Panc1 (cell line): ENCODE measurements at regions of chr5 and their contacts with region 1.

Region 1: GRCh38 chr5:135560858-135561257 is 17.9 kb downstream of the CXCL14 start:
- DNase-seq: peak; percentile 42
- ATAC-seq: peak; percentile 95
- H3K4me3 ChIP-seq: no peak overlapping the region
- H3K27ac ChIP-seq: no peak overlapping the region
- H3K4me1 ChIP-seq: no peaks in the 10 kb centered on the region
- H3K27me3 ChIP-seq: peaks cover 15% of the 10 kb centered on the region
- CTCF ChIP-seq: peak; percentile 93

Region 2: GRCh38 chr5:135457424-135458071 is 103.3 kb before region 1 on chr5:
- CTCF ChIA-PET with region 1: interaction called, 12 read pairs
- POLR2A ChIA-PET with region 1: no interaction called
- in situ Hi-C with region 1: no loop called
- intact Hi-C with region 1: no loop called
- DNase-seq: no peak
- ATAC-seq: peak; percentile 88
- H3K4me3 ChIP-seq: no peak overlapping the region
- H3K27ac ChIP-seq: no peak overlapping the region
- H3K4me1 ChIP-seq: 0 out of 2 replicates have a peak, but pooled peaks cover 4% of the 10 kb centered on the region
- H3K27me3 ChIP-seq: peaks cover 15% of the 10 kb centered on the region
- CTCF ChIP-seq: peak; percentile 93

Region 3: GRCh38 chr5:135480511-135480910 is 80.3 kb before region 1 on chr5:
- CTCF ChIA-PET with region 1: interaction called, 10 read pairs
- POLR2A ChIA-PET with region 1: no interaction called
- in situ Hi-C with region 1: no loop called
- intact Hi-C with region 1: no loop called
- DNase-seq: no peak
- ATAC-seq: no peak
- H3K4me3 ChIP-seq: no peak overlapping the region
- H3K27ac ChIP-seq: no peak overlapping the region
- H3K4me1 ChIP-seq: no peaks in the 10 kb centered on the region
- H3K27me3 ChIP-seq: peaks cover under 1% of the 10 kb centered on the region
- CTCF ChIP-seq: no peak

Region 4: GRCh38 chr5:135729321-135729786 is 168.5 kb after region 1 on chr5:
- CTCF ChIA-PET with region 1: interaction called, 8 read pairs
- POLR2A ChIA-PET with region 1: interaction called, 3 read pairs
- in situ Hi-C with region 1: no loop called
- intact Hi-C with region 1: loop called (anchors 5 kb)
- DNase-seq: no peak
- ATAC-seq: peak; percentile 66; the same call in 1 of the 2 replicates
- H3K4me3 ChIP-seq: no peak overlapping the region
- H3K27ac ChIP-seq: no peak overlapping the region
- H3K4me1 ChIP-seq: no peaks in the 10 kb centered on the region
- H3K27me3 ChIP-seq: peaks cover 6% of the 10 kb centered on the region; the same call in 1 of the 2 replicates
- CTCF ChIP-seq: no peak; the same call in 1 of the 2 replicates

Region 5: DNA sequence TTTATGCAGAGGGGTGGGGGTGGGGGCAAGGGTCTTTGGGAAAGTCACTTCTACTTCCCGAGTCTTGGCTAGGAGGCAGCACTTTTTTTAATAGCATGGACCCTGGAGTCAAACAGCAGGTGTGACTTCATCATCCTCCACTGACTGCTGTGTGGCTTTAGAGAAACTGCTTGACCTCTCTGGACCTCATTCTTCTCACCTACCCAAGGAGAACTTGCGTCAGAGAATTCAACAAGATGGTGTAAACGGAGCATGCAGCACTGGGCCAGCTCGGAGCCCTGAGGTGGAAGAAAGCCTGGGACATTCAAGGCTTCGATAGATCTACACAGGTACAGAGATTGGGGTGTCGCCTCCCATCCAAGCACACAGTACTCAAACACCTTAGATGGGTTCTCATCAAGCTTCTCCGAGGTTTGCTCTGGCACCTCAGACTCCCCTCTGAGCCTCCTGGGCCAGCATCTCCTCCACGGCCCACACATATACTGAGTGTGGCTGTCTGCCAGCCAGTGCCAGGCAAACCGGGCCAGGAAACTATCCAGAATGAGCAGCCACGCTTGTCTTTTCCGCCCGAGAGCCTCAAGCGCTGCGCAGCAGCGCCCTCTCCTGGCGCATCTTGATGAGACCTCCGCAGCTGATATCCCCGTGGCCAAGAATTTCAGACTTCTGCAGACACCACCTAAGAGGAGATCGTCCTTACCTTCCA is 269.0 kb after region 1 on chr5:
- CTCF ChIA-PET with region 1: interaction called, 11 read pairs
- POLR2A ChIA-PET with region 1: no interaction called
- in situ Hi-C with region 1: no loop called
- intact Hi-C with region 1: loop called (anchors 2 kb)
- DNase-seq: peak; percentile 42
- ATAC-seq: peak; percentile 55; the same call in 1 of the 2 replicates
- H3K4me3 ChIP-seq: no peak overlapping the region
- H3K27ac ChIP-seq: no peak overlapping the region
- H3K4me1 ChIP-seq: 0 out of 2 replicates have a peak, but pooled peaks cover under 1% of the 10 kb centered on the region
- H3K27me3 ChIP-seq: peaks cover 15% of the 10 kb centered on the region
- CTCF ChIP-seq: peak; percentile 90

Region 6: DNA sequence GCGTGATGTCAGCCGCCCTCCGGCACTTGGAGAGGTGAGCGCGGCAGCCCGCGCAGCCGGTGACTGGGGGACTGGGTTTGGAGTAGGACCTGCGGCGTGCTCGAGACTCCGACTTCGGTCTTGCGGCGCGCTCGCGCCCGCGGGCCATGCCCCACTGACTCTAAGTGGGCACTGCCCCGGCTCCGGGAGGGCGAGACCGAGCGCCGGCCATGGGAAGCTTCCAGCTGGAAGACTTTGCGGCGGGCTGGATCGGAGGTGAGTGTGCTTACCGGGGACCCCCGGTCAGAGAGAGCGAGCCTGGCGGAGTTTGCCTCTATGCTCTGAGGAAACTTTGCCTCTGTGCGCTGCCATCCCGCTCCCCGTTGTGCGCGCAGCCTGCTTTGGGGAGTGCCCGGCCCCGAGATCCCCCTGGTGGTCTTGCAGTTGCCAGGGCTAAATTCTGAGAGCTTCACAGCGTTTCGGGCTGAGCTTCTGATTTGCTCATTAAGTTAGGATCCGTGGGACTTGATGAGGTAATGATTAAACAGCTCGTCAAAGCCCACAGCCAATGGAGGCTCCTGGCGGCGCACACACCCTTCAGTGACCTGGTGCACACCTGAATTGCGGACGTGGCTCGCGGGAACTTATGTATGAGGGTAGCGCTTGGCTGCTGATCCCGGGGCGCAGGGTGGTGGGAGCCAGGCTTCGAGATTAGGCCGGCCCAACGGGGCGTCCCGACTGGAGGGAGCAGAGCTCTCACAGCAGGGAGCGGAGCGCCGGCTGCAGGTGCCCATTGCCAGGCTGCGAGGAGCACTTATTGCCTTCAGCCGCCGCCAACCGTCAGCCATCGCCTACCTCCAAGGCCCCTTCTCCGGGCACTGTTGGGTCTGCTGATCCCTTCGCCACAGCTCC is 274.0 kb after region 1 on chr5 and contains the start of gene SLC25A48:
- CTCF ChIA-PET with region 1: interaction called, 15 read pairs
- POLR2A ChIA-PET with region 1: no interaction called
- in situ Hi-C with region 1: no loop called
- intact Hi-C with region 1: loop called (anchors 2 kb)
- DNase-seq: no peak
- ATAC-seq: peak; percentile 91
- H3K4me3 ChIP-seq: peak within 1 kb of the TSS; percentile 33 to 54
- H3K27ac ChIP-seq: no peak within 1 kb of the TSS
- H3K4me1 ChIP-seq: 0 out of 2 replicates have a peak, but pooled peaks cover 3% of the 10 kb centered on the region
- H3K27me3 ChIP-seq: peaks cover 35% of the 10 kb centered on the region
- CTCF ChIP-seq: peak; percentile 89
- total RNA-seq, gene SLC25A48: not detected